ENCODE measurements at regions of chr10 and their contacts with region 1.

Region 1: GRCh38 chr10:100986952-100987750 is at the starts of genes MRPL43 and TWNK:
- DNase-seq: no peak
- ATAC-seq: peak; percentile 95
- H3K4me3 ChIP-seq: peak within 1 kb of the TSS; percentile 84 to 98
- H3K27ac ChIP-seq: peak within 1 kb of the TSS; percentile 95
- H3K4me1 ChIP-seq: peaks cover 30% of the 10 kb centered on the region
- H3K27me3 ChIP-seq: no peaks in the 10 kb centered on the region
- CTCF ChIP-seq: no peak
- total RNA-seq, gene MRPL43: 108 TPM
- total RNA-seq, gene TWNK: 30.5 TPM

Region 2: GRCh38 chr10:100912605-100913469 is 74.3 kb before region 1 on chr10 and contains the start of gene SLF2:
- CTCF ChIA-PET with region 1: interaction called, 10 read pairs
- POLR2A ChIA-PET with region 1: no interaction called
- in situ Hi-C with region 1: no loop called
- intact Hi-C with region 1: no loop called
- DNase-seq: peak; percentile 95
- ATAC-seq: peak; percentile 98
- H3K4me3 ChIP-seq: peak within 1 kb of the TSS; percentile 82 to 85
- H3K27ac ChIP-seq: peak within 1 kb of the TSS; percentile 93
- H3K4me1 ChIP-seq: peaks cover 16% of the 10 kb centered on the region
- H3K27me3 ChIP-seq: no peaks in the 10 kb centered on the region
- CTCF ChIP-seq: no peak
- total RNA-seq, gene SLF2: 38.8 TPM

Region 3: DNA sequence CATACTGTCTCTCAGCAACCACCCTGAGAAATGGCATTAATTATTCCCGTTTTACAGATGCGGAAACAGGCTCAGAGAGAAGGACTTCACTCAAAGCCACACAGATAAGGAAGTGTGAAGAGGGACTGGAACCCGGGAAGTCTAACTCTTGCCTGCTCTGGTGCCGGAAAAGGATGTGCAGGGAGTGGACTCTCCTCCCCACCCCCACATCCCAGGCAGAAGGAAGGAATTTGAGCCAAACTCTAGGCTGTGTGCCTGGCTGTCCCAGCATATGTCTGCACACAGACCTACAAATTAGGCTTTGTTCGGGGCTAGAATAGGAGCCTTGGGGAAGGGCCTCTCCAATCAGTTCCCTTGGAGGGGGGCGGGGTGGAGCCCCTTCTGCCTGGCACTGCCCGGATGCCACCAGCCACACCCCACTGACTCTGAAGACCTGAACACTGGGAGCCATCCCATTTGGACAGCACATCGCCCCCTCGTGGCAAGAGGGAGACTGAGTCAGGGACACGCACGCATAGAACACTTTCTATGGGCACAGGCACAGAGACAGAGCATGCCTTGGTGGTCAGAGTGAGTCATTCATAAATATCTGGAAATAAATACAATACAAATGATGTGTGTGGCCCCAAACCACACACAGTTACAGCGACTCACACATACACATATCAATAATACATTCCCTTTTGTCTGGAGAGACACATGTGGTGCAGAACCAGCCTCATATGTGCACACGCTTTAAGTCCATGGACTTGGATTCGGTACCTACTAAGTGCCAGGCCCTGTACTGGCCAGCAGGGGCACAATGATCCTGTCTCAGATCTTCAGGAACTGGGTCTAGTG is 25.6 kb after region 1 on chr10:
- CTCF ChIA-PET with region 1: interaction called, 10 read pairs
- POLR2A ChIA-PET with region 1: no interaction called
- in situ Hi-C with region 1: no loop called
- intact Hi-C with region 1: no loop called
- DNase-seq: no peak
- ATAC-seq: peak; percentile 87
- H3K4me3 ChIP-seq: no peak overlapping the region
- H3K27ac ChIP-seq: no peak overlapping the region
- H3K4me1 ChIP-seq: peaks cover 18% of the 10 kb centered on the region
- H3K27me3 ChIP-seq: no peaks in the 10 kb centered on the region
- CTCF ChIP-seq: peak; percentile 97

Region 4: GRCh38 chr10:101031128-101031795 is 44.1 kb after region 1 on chr10 and contains the starts of genes PDZD7 and SFXN3:
- CTCF ChIA-PET with region 1: interaction called, 12 read pairs
- POLR2A ChIA-PET with region 1: no interaction called
- in situ Hi-C with region 1: no loop called
- intact Hi-C with region 1: no loop called
- DNase-seq: no peak
- ATAC-seq: peak; percentile 93
- H3K4me3 ChIP-seq: peak within 1 kb of the TSS; percentile 69 to 94
- H3K27ac ChIP-seq: no peak within 1 kb of the TSS; the same call in 1 of the 2 replicates
- H3K4me1 ChIP-seq: peaks cover 20% of the 10 kb centered on the region
- H3K27me3 ChIP-seq: no peaks in the 10 kb centered on the region
- CTCF ChIP-seq: no peak
- total RNA-seq, gene PDZD7: 1.8 TPM
- total RNA-seq, gene SFXN3: 15.3 TPM

Measured in Panc1 (cell line).